Activated naive CD4-positive, alpha-beta T cell treated with anti-CD3 and anti-CD28 coated beads for 36 hours (primary cell): ENCODE measurements at regions of chr6 and their contacts with region 1.

Region 1: DNA sequence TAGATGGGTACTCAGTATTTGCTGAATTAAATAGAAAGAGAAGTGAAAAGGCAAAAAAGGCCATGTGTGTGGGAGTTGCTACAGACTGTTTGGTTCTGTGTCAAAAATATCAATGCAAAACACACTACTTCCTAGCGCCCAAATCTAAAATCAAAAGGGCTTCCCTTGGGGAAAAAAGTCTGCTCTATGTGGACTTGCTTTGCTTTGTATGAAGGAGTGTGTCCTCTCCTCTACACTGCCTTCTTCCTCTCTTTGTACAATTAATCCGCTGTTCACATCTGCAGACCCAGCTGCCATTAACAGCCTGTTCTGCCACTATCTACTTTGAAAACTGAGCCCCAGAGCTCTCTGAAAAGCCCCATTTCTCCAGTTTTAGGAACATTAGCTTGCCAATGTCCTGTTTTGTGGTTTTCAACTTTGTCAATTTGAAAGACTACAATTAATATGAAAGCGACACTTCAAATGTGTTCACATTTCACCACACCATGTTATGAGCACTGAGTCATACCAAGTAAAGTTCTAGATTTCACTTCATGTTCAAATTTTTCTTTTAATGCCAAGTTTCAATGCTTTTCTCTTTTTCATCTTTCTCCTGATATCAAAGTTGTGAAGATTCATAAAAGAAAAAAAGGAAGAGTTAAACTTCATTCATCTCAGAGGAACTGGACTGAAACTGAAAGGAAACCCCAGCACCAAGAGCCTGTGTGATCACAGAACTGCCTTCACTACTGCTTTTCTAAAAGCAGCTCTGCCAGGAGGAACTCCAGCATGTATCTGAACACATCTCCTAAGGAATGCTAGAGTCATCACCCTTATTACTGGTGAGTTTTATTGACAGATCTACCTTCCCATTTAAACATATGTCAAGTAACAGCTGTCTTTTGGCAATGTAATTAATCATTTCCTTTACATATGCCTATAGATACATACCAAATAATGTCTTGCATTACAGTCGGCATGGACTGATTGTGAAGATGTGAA is 102.6 kb downstream of the KIF13A start:
- DNase-seq: peak; percentile 30
- H3K4me3 Mint-ChIP-seq: no peak overlapping the region
- H3K27ac Mint-ChIP-seq: no peak overlapping the region
- H3K4me1 Mint-ChIP-seq: peaks cover 21% of the 10 kb centered on the region
- H3K27me3 Mint-ChIP-seq: peaks cover 49% of the 10 kb centered on the region

Region 2: GRCh38 chr6:17015144-17015543 is 869.6 kb before region 1 on chr6:
- CTCF ChIA-PET with region 1: no interaction called
- intact Hi-C with region 1: loop called (anchors 5 kb)
- DNase-seq: peak; percentile 56
- H3K4me3 Mint-ChIP-seq: peak overlapping the region; percentile 41
- H3K27ac Mint-ChIP-seq: no peak overlapping the region
- H3K4me1 Mint-ChIP-seq: peaks cover 18% of the 10 kb centered on the region
- H3K27me3 Mint-ChIP-seq: peaks cover 27% of the 10 kb centered on the region

Region 3: GRCh38 chr6:17599885-17600526 is 284.8 kb before region 1 on chr6 and contains the start of gene FAM8A1:
- CTCF ChIA-PET with region 1: no interaction called
- intact Hi-C with region 1: loop called (anchors 2 kb)
- DNase-seq: peak; percentile 98
- H3K4me3 Mint-ChIP-seq: peak within 1 kb of the TSS; percentile 75
- H3K27ac Mint-ChIP-seq: peak within 1 kb of the TSS; percentile 53
- H3K4me1 Mint-ChIP-seq: peaks cover 29% of the 10 kb centered on the region
- H3K27me3 Mint-ChIP-seq: no peaks in the 10 kb centered on the region
- total RNA-seq, gene FAM8A1: 2.9 to 3.0 TPM

Region 4: GRCh38 chr6:18115356-18115755 is 230.6 kb after region 1 on chr6:
- CTCF ChIA-PET with region 1: no interaction called
- intact Hi-C with region 1: loop called (anchors 1 kb)
- DNase-seq: peak; percentile 20
- H3K4me3 Mint-ChIP-seq: no peak overlapping the region
- H3K27ac Mint-ChIP-seq: no peak overlapping the region
- H3K4me1 Mint-ChIP-seq: peaks cover 10% of the 10 kb centered on the region
- H3K27me3 Mint-ChIP-seq: peaks cover 34% of the 10 kb centered on the region

Region 5: GRCh38 chr6:18155150-18155863 is 270.5 kb after region 1 on chr6 and contains the start of gene KDM1B:
- CTCF ChIA-PET with region 1: no interaction called
- intact Hi-C with region 1: loop called (anchors 2 kb)
- DNase-seq: peak; percentile 98
- H3K4me3 Mint-ChIP-seq: peak within 1 kb of the TSS; percentile 97
- H3K27ac Mint-ChIP-seq: peak within 1 kb of the TSS; percentile 88
- H3K4me1 Mint-ChIP-seq: peaks cover 22% of the 10 kb centered on the region
- H3K27me3 Mint-ChIP-seq: no peaks in the 10 kb centered on the region
- total RNA-seq, gene KDM1B: 14.4 to 15.2 TPM